Spleen (tissue), 13 donors: ENCODE measurements at regions of chr20 and their contacts with region 1.

Region 1: GRCh38 chr20:41232973-41233926 is 84.3 kb downstream of the ZHX3 start:
- DNase-seq: no peak
- H3K4me3 ChIP-seq: peak overlapping the region in 1 of 8 donors; percentile 22
- H3K27ac ChIP-seq: peak overlapping the region in 1 of 8 donors; percentile 32
- H3K4me1 ChIP-seq: peaks cover 0 to 40% (median 15%) of the 10 kb centered on the region in 6 donors
- H3K27me3 ChIP-seq: no peaks in the 10 kb centered on the region
- CTCF ChIP-seq: no peak
- POLR2A ChIP-seq: no peak

Region 2: GRCh38 chr20:41173161-41173721 is 60.0 kb before region 1 on chr20:
- intact Hi-C with region 1: loop called (anchors 10 kb)
- DNase-seq: peak; percentile 90
- H3K4me3 ChIP-seq: no peak overlapping the region
- H3K27ac ChIP-seq: peak overlapping the region in 3 of 8 donors; percentile 38 to 59 (median 56)
- H3K4me1 ChIP-seq: peaks cover 6 to 23% (median 14%) of the 10 kb centered on the region in 6 donors
- H3K27me3 ChIP-seq: no peaks in the 10 kb centered on the region
- CTCF ChIP-seq: peak; percentile 83 to 95 (median 91)
- POLR2A ChIP-seq: no peak